Mammary epithelial cell (primary cell): ENCODE measurements at regions of chr16 and their contacts with region 1.

Region 1: GRCh38 chr16:4253394-4254150 is 11.7 kb upstream of the SRL start:
- DNase-seq: peak; percentile 98
- H3K4me3 ChIP-seq: peak overlapping the region; percentile 66 to 86 (median 77)
- H3K27ac ChIP-seq: peak overlapping the region; percentile 71
- H3K4me1 ChIP-seq: no peaks in the 10 kb centered on the region
- H3K27me3 ChIP-seq: no peaks in the 10 kb centered on the region
- CTCF ChIP-seq: peak in 1 of 2 donors; percentile 4

Region 2: GRCh38 chr16:4064950-4065352 is 188.6 kb before region 1 on chr16:
- CTCF ChIA-PET with region 1: no interaction called
- dilution Hi-C with region 1: no loop called
- in situ Hi-C with region 1: no loop called
- intact Hi-C with region 1: no loop called
- DNase-seq: no peak
- H3K4me3 ChIP-seq: no peak overlapping the region
- H3K27ac ChIP-seq: no peak overlapping the region
- H3K4me1 ChIP-seq: no peaks in the 10 kb centered on the region
- H3K27me3 ChIP-seq: no peaks in the 10 kb centered on the region
- CTCF ChIP-seq: no peak

Region 3: GRCh38 chr16:4086153-4086552 is 167.4 kb before region 1 on chr16:
- CTCF ChIA-PET with region 1: interaction called, 29 read pairs
- dilution Hi-C with region 1: no loop called
- in situ Hi-C with region 1: no loop called
- intact Hi-C with region 1: no loop called
- DNase-seq: no peak
- H3K4me3 ChIP-seq: no peak overlapping the region
- H3K27ac ChIP-seq: no peak overlapping the region
- H3K4me1 ChIP-seq: no peaks in the 10 kb centered on the region
- H3K27me3 ChIP-seq: no peaks in the 10 kb centered on the region
- CTCF ChIP-seq: no peak

Region 4: GRCh38 chr16:4183237-4184036 is 70.1 kb before region 1 on chr16:
- CTCF ChIA-PET with region 1: interaction called, 5 read pairs
- dilution Hi-C with region 1: no loop called
- in situ Hi-C with region 1: no loop called
- intact Hi-C with region 1: loop called (anchors 1 kb)
- DNase-seq: peak; percentile 92
- H3K4me3 ChIP-seq: peak overlapping the region; percentile 72 to 78 (median 73)
- H3K27ac ChIP-seq: peak overlapping the region; percentile 84
- H3K4me1 ChIP-seq: peaks cover 13% of the 10 kb centered on the region
- H3K27me3 ChIP-seq: no peaks in the 10 kb centered on the region
- CTCF ChIP-seq: no peak

Region 5: DNA sequence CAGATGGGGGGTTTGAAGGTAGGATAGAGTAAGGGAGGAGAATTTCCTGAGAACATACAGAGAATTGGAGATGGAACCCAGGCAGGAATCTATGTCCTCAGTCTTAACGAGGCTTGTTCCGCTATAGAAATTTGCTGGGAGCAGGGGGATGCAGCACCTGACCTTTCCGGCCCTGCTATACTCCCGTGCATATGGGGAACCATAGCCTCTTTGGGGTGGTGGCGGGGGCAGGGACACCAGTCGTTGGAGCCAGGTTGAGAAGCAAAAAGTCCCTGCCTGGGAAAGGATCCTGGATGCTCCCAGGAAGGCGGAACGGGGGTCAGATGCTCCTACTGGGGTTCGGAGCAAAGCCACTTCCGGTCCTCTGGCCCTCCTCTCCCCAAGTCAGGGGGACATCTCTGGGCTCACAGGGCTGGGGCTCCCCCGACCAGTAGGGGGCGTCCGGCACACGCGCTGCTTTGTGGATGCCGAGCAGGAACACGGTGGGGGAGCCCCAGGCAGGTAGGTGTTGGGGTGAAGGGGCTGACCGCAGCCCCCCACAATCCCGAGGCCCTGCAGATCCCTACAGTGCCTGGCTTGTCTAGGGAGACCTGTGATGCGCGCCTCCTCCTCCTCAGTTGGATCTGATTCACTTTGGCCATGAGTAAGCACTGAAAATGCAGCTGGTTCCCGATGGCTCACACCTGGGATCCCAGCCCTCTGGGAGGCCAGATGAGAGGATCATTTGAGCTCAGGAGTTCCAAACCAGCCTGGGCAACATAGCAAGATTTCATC is 34.8 kb after region 1 on chr16:
- CTCF ChIA-PET with region 1: interaction called, 7 read pairs
- dilution Hi-C with region 1: no loop called
- in situ Hi-C with region 1: no loop called
- intact Hi-C with region 1: loop called (anchors 2 kb)
- DNase-seq: peak; percentile 84
- H3K4me3 ChIP-seq: no peak overlapping the region
- H3K27ac ChIP-seq: no peak overlapping the region
- H3K4me1 ChIP-seq: peaks cover 25% of the 10 kb centered on the region
- H3K27me3 ChIP-seq: no peaks in the 10 kb centered on the region
- CTCF ChIP-seq: peak; percentile 52 to 91

Region 6: DNA sequence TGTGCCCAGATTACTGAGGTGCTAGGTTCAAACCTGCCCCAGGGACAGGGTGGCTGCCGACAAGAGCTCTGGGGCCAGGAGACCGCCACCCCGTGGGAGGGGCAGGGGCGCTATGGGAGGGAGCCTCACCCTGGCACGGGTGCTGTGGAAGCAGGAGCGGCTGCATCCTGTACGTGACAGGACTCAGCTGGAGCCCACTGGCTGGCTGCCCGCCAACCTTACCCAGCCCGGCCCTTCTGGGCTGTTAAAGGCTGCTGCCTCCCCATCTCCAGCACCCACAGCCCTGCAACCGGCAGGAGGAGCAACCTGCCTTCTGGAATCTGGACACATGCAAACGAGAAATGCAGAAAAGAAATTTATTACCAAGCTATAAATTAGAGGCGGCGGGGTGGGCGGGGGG is 86.3 kb after region 1 on chr16:
- CTCF ChIA-PET with region 1: no interaction called
- dilution Hi-C with region 1: loop called (anchors 10 kb)
- in situ Hi-C with region 1: no loop called
- intact Hi-C with region 1: no loop called
- DNase-seq: no peak
- H3K4me3 ChIP-seq: no peak overlapping the region
- H3K27ac ChIP-seq: no peak overlapping the region
- H3K4me1 ChIP-seq: no peaks in the 10 kb centered on the region
- H3K27me3 ChIP-seq: no peaks in the 10 kb centered on the region
- CTCF ChIP-seq: no peak